ENCODE measurements at regions of chr9 and their contacts with region 1.

Region 1: DNA sequence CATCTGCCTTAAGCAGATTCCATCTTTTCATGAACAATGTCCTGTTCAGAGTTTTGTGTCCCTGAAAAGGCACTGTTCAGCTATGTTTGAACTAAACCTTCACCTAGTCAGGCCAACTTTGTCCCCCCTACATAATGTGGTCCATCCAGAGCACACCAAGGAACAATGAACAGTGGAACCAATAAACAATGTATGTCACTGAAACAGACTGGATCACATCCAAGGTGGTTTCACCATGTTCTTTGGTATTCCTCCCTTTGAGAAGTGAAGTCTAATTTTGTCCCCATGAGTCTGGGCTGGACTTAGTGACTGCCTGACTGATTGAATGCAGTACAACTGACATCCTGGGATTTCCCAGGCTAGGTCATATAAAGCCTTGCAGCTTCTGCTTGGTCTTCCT is 174.5 kb downstream of the SLC24A2 start:
- DNase-seq: no peak
- H3K4me3 ChIP-seq: no peak overlapping the region
- H3K27ac ChIP-seq: no peak overlapping the region
- H3K4me1 ChIP-seq: no peaks in the 10 kb centered on the region
- H3K27me3 ChIP-seq: no peaks in the 10 kb centered on the region
- CTCF ChIP-seq: no peak
- POLR2A ChIP-seq: no peak

Region 2: GRCh38 chr9:18753904-18754303 is 860.4 kb before region 1 on chr9:
- intact Hi-C with region 1: loop called (anchors 5 kb)
- DNase-seq: no peak
- H3K4me3 ChIP-seq: no peak overlapping the region
- H3K27ac ChIP-seq: no peak overlapping the region
- H3K4me1 ChIP-seq: no peaks in the 10 kb centered on the region
- H3K27me3 ChIP-seq: no peaks in the 10 kb centered on the region
- CTCF ChIP-seq: no peak
- POLR2A ChIP-seq: no peak

Region 3: DNA sequence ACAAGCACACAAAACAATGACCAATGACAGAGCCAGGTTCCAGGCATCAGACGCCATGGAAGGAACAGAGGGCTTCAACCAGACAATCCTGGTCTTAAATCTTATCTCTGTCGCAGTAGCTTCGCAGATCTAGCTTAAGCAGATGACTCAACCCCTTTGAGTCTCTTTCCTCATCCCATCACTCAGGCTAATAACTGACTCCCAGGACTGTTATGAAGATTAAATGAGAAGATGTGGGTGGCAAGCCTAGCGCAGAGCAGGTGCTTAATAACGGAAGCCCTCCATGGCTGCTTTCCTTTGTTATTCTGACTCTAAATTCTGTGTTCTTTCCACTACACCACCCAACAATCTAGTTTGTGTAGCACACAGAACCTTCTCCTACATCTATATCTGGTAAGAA is 63.6 kb after region 1 on chr9:
- intact Hi-C with region 1: no loop called
- DNase-seq: no peak
- H3K4me3 ChIP-seq: no peak overlapping the region
- H3K27ac ChIP-seq: no peak overlapping the region
- H3K4me1 ChIP-seq: no peaks in the 10 kb centered on the region
- H3K27me3 ChIP-seq: no peaks in the 10 kb centered on the region
- CTCF ChIP-seq: no peak
- POLR2A ChIP-seq: no peak

Measured in vagina (tissue), 2 donors.